ENCODE measurements at regions of chr5 and their contacts with region 1.

Region 1: DNA sequence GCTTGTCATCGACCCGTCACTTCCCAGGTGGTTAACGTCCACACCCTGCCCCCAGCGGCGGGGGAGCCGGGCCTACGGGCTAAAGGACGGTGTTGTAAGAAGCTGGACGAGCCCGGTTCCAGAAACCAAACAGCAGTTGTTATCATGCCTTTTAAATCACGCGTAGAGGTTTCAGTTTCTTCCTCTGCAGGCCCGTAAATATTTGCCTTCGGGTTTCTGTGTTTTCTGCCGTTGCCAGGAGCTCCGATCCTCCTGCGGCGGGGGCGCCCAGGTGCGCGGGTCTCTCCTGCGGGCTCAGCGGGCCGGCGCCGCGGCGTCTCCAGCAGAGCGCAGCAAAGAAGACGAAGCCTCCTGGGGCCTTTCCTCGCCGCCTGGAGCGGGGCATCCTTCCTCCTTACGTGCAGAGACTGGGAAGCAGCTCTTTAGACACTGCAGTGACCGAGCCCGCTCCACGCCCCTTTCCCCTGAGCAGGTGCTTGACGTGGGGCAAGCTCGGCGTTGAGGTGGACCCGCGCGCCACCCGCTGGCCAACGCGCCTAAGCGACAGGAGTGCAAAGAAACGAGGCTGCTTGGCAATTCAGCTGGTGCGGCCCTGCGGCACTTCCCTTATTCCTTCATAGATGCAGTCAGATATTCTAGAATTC is 21.8 kb upstream of the TTC1 start:
- DNase-seq: peak; percentile 53 to 93
- H3K4me3 ChIP-seq: peak overlapping the region; percentile 13
- CTCF ChIP-seq: no peak
- POLR2A ChIP-seq: no peak

Region 2: GRCh38 chr5:159444441-159445082 is 542.6 kb before region 1 on chr5:
- intact Hi-C with region 1: loop called (anchors 10 kb)
- DNase-seq: no peak
- H3K4me3 ChIP-seq: no peak overlapping the region
- CTCF ChIP-seq: no peak
- POLR2A ChIP-seq: no peak

Region 3: DNA sequence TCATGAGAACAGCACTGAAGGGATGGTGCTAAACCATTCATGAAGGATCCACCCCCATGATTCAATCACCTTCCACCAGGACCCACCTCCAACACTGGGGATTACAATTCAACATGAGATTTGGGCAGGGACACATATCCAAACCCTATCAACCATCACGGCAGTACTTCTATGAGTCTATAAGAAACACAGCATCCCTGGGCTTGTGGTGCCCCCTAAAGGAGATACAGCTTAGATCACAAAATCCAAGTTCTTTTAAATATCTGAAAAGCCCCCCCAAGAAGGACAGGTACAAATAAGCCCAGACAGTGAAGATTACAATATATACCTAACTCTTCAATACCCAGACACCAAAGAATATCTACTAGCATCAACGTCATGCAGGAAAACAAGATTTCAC is 304.5 kb before region 1 on chr5:
- intact Hi-C with region 1: no loop called
- DNase-seq: no peak
- H3K4me3 ChIP-seq: no peak overlapping the region
- CTCF ChIP-seq: no peak
- POLR2A ChIP-seq: no peak